ENCODE measurements at regions of chr22 and their contacts with region 1.

Region 1: GRCh38 chr22:39519681-39520053 is 695 bp upstream of the ATF4 start:
- DNase-seq: peak; percentile 64 to 84
- ATAC-seq: peak; percentile 39 to 60 (median 55)
- H3K4me3 ChIP-seq: peak overlapping the region; percentile 100
- H3K27ac ChIP-seq: peak overlapping the region; percentile 100
- H3K4me1 ChIP-seq: peaks cover 25% of the 10 kb centered on the region
- H3K27me3 ChIP-seq: no peaks in the 10 kb centered on the region
- CTCF ChIP-seq: peak; percentile 39

Region 2: DNA sequence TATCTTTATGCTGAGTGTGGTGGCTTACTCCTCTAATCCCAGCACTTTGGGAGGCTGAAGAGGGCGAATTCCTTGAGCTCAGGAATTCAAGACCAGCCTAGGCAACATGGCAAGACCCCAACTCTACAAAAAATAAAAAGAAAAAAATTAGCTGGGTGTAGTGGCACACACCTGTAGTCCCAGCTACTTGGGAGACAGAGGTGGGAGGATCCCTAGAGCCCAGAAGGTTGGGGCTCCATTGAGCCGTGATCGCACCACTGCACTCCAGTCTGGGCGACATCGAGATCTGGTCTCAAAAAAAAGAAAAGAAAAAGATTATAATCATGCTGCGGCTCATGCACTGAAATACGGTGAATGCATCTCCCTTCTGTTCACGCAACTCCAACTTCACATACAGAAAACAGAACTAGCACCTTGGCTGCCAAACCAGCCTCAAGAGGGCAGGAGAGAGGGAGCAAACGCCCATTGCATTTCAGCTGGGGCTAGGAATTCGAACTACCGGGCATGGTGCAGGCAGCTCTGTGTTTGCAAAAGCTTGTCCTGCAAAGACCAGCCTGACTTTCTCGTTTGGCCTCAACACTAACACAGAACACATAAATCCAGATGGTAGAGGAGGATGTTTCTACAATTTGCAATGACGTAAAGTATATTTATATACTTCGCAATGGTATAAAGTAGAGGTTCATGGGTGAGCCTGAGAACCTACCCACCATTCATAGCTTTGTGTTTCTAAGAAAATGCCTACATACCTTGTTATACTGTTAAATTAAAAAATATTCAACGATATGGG is 176.2 kb before region 1 on chr22:
- intact Hi-C with region 1: loop called in 1 of 2 experiments (anchors 10 kb)
- DNase-seq: peak in 1 of 2 donors; percentile 70
- ATAC-seq: peak; percentile 68 to 90 (median 86)
- H3K4me3 ChIP-seq: no peak overlapping the region
- H3K27ac ChIP-seq: no peak overlapping the region
- H3K4me1 ChIP-seq: no peaks in the 10 kb centered on the region
- H3K27me3 ChIP-seq: peaks cover 0 to 3% (median 0%) of the 10 kb centered on the region in 3 donors
- CTCF ChIP-seq: peak; percentile 67

Region 3: DNA sequence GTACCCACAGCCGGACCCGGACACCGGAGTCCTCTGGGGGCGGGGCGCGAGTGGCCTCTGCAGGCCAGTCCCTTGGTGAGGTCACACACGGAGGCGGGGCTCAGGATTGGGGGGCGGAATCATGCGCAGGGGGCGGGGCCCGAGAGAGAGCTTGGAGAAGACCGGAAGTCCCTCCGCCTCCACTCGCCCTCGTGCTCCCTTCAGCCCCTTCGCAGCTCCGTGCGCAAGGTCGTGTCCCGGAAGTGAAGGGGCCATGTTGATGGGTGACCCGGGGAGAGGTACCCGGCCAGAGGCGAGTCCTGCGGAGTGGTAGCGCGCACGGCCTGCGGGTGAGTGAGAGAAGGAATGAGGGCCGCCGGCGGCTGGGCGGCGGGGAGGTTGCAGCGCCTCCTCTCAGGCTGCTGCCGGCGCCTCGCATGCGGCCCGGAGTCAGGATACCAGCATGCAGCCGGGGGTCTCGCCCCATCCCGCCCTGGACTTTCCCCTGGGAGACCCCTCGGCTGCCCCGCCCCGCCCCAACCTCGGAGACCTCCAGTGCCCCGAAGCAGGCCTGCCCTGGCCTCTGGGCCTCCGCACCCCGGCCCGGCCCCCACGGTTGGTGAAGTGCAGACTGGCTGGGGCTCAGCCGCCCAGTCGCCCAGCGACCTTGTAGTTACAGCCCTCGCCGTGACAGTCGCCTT is 17.4 kb before region 1 on chr22 and contains the start of gene MIEF1:
- intact Hi-C with region 1: loop called in 1 of 2 experiments (anchors 2 kb)
- DNase-seq: peak; percentile 98 to 99
- ATAC-seq: peak; percentile 98 to 99 (median 99)
- H3K4me3 ChIP-seq: peak within 1 kb of the TSS; percentile 87
- H3K27ac ChIP-seq: peak within 1 kb of the TSS; percentile 91
- H3K4me1 ChIP-seq: peaks cover 19% of the 10 kb centered on the region
- H3K27me3 ChIP-seq: no peaks in the 10 kb centered on the region
- CTCF ChIP-seq: no peak
- total RNA-seq, gene MIEF1: 8.6 to 18.7 (median 13.3) TPM